ENCODE measurements at regions of chr6 and their contacts with region 1.

Region 1: DNA sequence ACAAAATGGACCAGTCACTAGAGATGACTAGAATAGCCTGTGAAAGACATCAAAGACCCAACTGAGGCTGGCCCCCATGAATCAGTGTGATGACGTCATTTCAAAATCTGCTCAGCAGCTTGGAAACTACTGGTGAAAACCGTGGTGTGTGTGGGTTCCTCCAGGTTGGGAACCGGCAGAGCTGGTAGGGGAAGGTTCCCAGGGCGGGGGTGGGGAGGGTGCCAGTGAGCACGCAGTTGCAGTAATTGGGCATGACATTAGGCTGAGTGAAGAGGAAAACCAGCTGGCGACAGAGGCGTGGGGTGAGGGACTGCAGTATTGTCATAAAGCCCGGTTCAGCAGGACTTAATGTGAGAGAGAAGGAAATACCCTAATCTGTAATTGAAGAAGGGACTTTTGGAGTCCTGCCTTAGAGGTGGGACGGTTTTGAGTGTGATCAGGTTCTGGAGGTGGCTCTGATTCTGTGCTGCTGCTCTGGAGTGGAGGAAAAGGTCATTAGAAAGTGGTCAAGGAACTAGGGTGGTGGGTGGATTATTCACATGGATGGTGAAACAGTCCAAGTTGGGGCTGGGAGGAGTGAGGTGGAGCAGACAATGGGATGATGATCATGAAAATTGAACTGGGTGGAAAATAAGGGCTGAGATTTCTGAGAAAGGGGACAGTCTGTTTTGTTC is 52.0 kb upstream of the MTHFD1L start:
- DNase-seq: peak; percentile 86
- ATAC-seq: peak; percentile 79
- H3K4me3 Mint-ChIP-seq: peak overlapping the region; percentile 8
- H3K27ac Mint-ChIP-seq: peak overlapping the region; percentile 94
- H3K4me1 Mint-ChIP-seq: peaks cover 28% of the 10 kb centered on the region
- H3K27me3 Mint-ChIP-seq: peaks cover 12% of the 10 kb centered on the region

Region 2: DNA sequence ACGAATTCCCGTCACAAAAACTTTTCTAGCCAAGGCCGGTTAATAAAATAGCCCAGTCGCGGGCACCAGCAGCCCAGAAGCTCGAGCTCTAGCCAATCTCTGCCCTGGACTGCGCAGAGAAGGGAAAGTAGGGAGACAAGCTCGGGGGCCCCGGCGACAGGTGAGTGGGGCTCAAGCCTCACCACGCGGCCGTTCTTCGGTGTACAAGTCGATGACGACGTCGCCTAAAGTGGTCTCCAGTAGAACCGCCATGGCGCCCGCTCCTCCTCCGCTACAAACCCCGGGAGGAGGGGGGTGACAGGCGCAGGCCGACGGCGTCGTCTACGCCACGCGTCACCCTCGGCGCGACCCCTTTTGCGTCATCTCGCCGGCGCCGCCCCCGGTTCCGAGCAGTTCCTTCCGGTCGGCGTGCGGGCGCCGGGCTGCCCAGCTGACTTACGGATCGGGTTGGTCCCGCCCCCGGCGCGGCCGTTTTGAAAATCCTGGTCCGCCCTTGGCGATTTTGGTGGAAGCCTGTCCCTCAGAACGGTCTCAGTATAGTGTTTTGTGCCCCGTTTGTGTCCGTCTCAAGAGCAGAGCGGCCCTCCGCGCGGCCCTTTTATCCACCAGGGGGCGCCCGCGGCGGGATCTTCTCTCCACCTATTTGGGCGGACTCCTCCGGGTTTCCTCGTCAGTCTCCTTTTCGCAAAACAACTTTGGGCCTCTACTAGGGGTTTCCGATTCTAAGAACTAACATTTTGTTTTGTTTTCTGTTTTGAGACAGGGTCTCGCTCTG is 1267.5 kb before region 1 on chr6 and contains the start of gene PPIL4:
- CTCF ChIA-PET with region 1: no interaction called
- POLR2A ChIA-PET with region 1: no interaction called
- intact Hi-C with region 1: loop called in 1 of 2 experiments (anchors 5 kb)
- DNase-seq: peak; percentile 98
- ATAC-seq: peak; percentile 85
- H3K4me3 Mint-ChIP-seq: peak within 1 kb of the TSS; percentile 97
- H3K27ac Mint-ChIP-seq: peak within 1 kb of the TSS; percentile 98
- H3K4me1 Mint-ChIP-seq: peaks cover 42% of the 10 kb centered on the region
- H3K27me3 Mint-ChIP-seq: no peaks in the 10 kb centered on the region
- total RNA-seq, gene PPIL4: 22.6 to 26.8 TPM

Region 3: GRCh38 chr6:150169609-150170008 is 643.8 kb before region 1 on chr6:
- CTCF ChIA-PET with region 1: no interaction called
- POLR2A ChIA-PET with region 1: no interaction called
- intact Hi-C with region 1: loop called in 1 of 2 experiments (anchors 1 kb)
- DNase-seq: peak; percentile 73
- ATAC-seq: peak; percentile 98
- H3K4me3 Mint-ChIP-seq: no peak overlapping the region
- H3K27ac Mint-ChIP-seq: peak overlapping the region; percentile 69
- H3K4me1 Mint-ChIP-seq: peaks cover 17% of the 10 kb centered on the region
- H3K27me3 Mint-ChIP-seq: peaks cover 22% of the 10 kb centered on the region

Region 4: GRCh38 chr6:150212778-150213177 is 600.7 kb before region 1 on chr6:
- CTCF ChIA-PET with region 1: no interaction called
- POLR2A ChIA-PET with region 1: no interaction called
- intact Hi-C with region 1: no loop called
- DNase-seq: no peak
- ATAC-seq: no peak
- H3K4me3 Mint-ChIP-seq: no peak overlapping the region
- H3K27ac Mint-ChIP-seq: no peak overlapping the region
- H3K4me1 Mint-ChIP-seq: no peaks in the 10 kb centered on the region
- H3K27me3 Mint-ChIP-seq: peaks cover 19% of the 10 kb centered on the region

Region 5: DNA sequence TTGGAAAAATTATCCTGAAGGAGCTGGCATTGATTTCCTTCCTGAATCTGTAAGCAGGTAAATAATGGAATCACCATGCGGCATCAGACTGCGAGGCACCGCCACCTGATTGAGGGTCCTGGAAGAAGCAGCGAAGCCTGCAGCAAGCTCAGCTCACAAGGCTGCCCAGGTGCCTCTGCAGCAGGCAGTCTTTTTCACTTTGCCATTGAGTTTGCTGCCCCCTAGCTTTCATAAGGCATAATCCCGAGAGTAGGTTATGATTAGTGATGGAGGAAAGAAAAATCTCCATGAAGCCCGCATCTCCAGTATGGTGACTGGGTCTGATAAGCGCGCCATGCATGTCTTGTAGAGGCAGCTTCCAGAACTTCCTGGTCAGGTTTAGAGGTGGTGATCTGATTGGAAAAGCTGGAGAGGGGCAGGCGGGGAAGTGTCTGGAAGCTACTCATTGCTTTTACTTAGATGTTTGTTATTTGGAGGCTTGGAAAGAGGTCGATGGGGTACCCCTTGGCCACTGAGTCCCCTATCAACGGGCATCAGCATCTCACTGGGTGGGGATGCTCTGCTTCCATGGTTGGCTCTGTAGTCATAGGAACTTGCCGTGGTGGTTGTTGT is 418.0 kb before region 1 on chr6:
- CTCF ChIA-PET with region 1: interaction called, 23 read pairs
- POLR2A ChIA-PET with region 1: no interaction called
- intact Hi-C with region 1: loop called in 1 of 2 experiments (anchors 5 kb)
- DNase-seq: peak; percentile 55
- ATAC-seq: peak; percentile 77
- H3K4me3 Mint-ChIP-seq: no peak overlapping the region
- H3K27ac Mint-ChIP-seq: no peak overlapping the region
- H3K4me1 Mint-ChIP-seq: no peaks in the 10 kb centered on the region
- H3K27me3 Mint-ChIP-seq: peaks cover 5% of the 10 kb centered on the region

Region 6: DNA sequence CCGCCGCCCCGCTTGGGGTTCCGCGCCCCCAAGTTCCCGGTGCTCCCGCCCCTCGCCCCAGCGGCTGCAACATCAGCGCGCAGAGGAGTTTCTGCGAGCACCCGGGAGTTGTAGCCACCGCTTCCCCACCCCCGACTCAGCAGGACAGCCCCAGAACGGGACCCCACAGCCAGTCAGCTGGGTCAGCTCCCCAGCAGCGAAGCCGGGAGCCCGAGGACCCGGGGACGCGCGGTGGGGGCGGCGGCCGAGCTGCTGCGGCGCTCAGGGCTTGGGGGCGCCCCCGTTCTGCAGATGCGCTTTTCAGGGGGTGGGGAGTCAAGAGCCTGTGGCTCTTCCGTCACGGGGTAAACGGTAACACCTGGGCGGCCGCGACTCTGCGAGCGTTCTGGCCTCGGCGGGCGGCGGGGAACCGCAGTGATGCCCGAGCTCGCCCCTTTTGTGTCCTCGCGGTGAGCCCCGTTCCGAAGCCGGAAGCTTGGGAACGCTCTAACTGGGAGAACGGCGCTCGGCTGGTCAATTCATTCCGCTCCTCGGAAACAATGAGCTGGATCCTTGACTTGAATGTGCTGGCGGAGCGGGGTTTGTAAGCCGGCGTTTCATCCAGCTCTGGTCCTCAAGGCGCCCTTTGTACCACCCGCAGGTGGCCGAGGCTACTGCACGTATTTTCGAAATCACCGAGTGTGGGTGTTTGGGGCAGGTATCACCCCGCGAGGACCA is 213.0 kb before region 1 on chr6:
- CTCF ChIA-PET with region 1: interaction called, 10 read pairs
- POLR2A ChIA-PET with region 1: interaction called, 5 read pairs
- intact Hi-C with region 1: loop called (anchors 1 to 2 kb)
- DNase-seq: peak; percentile 90
- ATAC-seq: peak; percentile 65
- H3K4me3 Mint-ChIP-seq: peak overlapping the region; percentile 80
- H3K27ac Mint-ChIP-seq: peak overlapping the region; percentile 88
- H3K4me1 Mint-ChIP-seq: peaks cover 23% of the 10 kb centered on the region
- H3K27me3 Mint-ChIP-seq: peaks cover 24% of the 10 kb centered on the region

Region 7: DNA sequence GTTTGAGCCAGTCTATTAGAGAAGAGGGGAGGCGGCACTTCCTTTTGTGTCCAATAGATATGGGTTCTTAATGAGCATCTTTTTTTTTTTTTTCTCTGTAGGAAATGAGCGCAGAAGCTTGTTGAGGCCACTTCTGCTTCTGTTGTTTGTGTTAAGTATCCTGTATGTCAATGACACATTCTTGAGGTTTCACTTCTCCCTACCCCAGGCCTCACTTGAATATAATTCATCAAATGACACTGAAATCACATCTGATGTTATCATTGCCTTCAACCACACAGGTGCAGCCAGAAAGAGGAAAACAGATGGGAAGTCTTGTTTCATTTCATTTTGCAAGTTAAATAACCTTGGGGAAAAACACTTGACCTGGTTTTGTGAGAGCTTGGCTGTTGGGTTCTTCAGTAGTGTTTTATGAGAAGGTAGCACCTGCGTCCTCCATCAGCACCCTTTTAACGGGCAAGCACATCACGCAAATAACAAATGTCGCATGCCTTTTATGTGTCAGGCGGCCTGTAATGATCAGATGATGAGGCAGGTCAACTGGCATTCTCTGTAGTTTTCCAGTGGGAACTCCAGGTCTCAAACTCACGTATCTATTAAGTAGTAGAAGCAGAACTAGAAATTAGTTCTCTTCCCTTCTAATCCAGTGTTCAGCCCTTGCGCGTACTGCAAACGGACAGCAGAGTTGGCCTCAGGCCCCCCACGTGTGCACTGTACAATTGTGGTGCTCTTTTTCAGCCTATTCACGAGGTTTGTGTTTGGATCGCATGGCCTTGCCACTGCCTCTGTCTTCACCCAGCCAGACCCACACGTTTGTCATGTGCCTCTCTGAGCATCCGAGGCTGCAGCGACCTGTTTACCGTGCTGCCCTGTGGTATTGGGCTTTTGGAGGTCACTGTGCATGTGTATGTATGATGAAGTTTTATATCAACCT is 190.2 kb before region 1 on chr6:
- CTCF ChIA-PET with region 1: no interaction called
- POLR2A ChIA-PET with region 1: no interaction called
- intact Hi-C with region 1: no loop called
- DNase-seq: peak; percentile 11
- ATAC-seq: peak; percentile 94
- H3K4me3 Mint-ChIP-seq: no peak overlapping the region
- H3K27ac Mint-ChIP-seq: no peak overlapping the region
- H3K4me1 Mint-ChIP-seq: peaks cover 19% of the 10 kb centered on the region
- H3K27me3 Mint-ChIP-seq: peaks cover 9% of the 10 kb centered on the region

Region 8: GRCh38 chr6:150698391-150698790 is 115.1 kb before region 1 on chr6:
- CTCF ChIA-PET with region 1: no interaction called
- POLR2A ChIA-PET with region 1: no interaction called
- intact Hi-C with region 1: no loop called
- DNase-seq: no peak
- ATAC-seq: no peak
- H3K4me3 Mint-ChIP-seq: no peak overlapping the region
- H3K27ac Mint-ChIP-seq: no peak overlapping the region
- H3K4me1 Mint-ChIP-seq: peaks cover 5% of the 10 kb centered on the region
- H3K27me3 Mint-ChIP-seq: no peaks in the 10 kb centered on the region

Region 9: DNA sequence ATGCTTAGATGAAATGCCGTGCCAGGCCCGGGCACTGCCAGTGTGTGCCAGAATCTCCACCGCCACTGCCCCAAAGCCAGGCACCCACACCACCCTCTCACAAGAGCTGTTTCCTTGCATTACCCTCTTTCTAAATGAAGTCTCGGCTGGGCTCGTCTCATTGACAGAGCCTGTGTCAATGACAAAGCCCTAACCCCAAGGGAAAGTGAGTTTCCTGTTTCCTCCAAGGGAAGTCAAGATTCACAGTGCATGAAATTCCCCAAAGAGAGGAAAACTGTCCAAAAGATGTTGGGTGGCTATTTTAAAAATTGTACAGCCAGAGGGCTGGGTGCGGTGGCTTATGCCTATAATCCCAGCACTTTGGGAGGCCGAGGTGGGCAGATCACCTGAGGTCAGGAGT is 350.9 kb after region 1 on chr6:
- CTCF ChIA-PET with region 1: no interaction called
- POLR2A ChIA-PET with region 1: no interaction called
- intact Hi-C with region 1: no loop called
- DNase-seq: no peak
- ATAC-seq: no peak
- H3K4me3 Mint-ChIP-seq: no peak overlapping the region
- H3K27ac Mint-ChIP-seq: no peak overlapping the region
- H3K4me1 Mint-ChIP-seq: no peaks in the 10 kb centered on the region
- H3K27me3 Mint-ChIP-seq: peaks cover 10% of the 10 kb centered on the region

Region 10: DNA sequence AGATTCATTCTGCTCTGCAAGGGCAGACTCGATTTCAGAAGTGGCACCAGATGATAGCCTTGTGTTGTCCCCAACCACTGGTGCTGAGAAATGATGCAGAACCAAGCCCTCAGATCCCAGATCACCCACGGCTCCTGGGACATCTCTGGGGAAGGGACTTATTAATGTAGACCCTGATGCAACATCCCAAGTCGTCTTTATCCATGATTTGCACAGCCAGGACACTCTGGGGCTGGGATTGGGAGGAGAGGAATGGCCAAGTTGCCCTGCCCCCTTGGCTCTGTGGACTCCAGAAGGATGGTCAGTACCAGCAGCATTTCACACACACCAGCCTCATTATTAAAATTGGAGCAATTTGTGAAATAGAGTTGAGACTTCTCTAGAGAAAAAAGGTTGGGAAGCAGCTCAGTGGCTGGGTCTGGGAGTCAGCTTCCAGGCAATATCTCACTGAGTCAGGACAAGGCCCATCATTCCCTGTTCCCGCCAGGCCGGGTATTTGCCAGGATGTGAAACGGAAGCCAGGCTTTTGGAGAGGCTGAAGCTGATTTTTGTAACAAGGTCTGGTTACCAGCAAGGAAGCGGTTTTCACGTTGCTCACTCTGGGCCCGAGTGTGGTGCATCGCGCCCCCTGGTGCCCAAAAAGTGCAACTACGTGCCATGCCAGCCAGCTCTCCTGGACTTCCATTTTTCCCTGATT is 510.5 kb after region 1 on chr6:
- CTCF ChIA-PET with region 1: interaction called, 5 read pairs
- POLR2A ChIA-PET with region 1: no interaction called
- intact Hi-C with region 1: loop called in 1 of 2 experiments (anchors 2 kb)
- DNase-seq: peak; percentile 83
- ATAC-seq: peak; percentile 90
- H3K4me3 Mint-ChIP-seq: no peak overlapping the region
- H3K27ac Mint-ChIP-seq: no peak overlapping the region
- H3K4me1 Mint-ChIP-seq: peaks cover 20% of the 10 kb centered on the region
- H3K27me3 Mint-ChIP-seq: peaks cover 31% of the 10 kb centered on the region